ENCODE measurements at regions of chr17 and their contacts with region 1.

Region 1: GRCh38 chr17:8745586-8746500 is 1.2 kb upstream of the CCDC42 start:
- DNase-seq: no peak
- H3K4me3 ChIP-seq: peak overlapping the region; percentile 67 to 76 (median 72)
- H3K27ac ChIP-seq: peak overlapping the region in 3 of 4 donors; percentile 9 to 51 (median 48)
- H3K4me1 ChIP-seq: peaks cover 4 to 18% (median 17%) of the 10 kb centered on the region in 4 donors
- H3K27me3 ChIP-seq: peaks cover 0 to 4% (median 0%) of the 10 kb centered on the region in 4 donors
- CTCF ChIP-seq: peak; percentile 81 to 99 (median 98)
- EP300 ChIP-seq: no peak
- POLR2A ChIP-seq: no peak

Region 2: GRCh38 chr17:8409966-8410864 is 335.6 kb before region 1 on chr17:
- intact Hi-C with region 1: loop called (anchors 2 kb)
- DNase-seq: peak; percentile 94
- H3K4me3 ChIP-seq: no peak overlapping the region
- H3K27ac ChIP-seq: no peak overlapping the region
- H3K4me1 ChIP-seq: peaks cover 0 to 8% (median 7%) of the 10 kb centered on the region in 4 donors
- H3K27me3 ChIP-seq: peaks cover 0 to 21% (median 0%) of the 10 kb centered on the region in 4 donors
- CTCF ChIP-seq: peak; percentile 83 to 87 (median 86)
- EP300 ChIP-seq: no peak
- POLR2A ChIP-seq: no peak

Region 3: GRCh38 chr17:8522577-8522976 is 223.3 kb before region 1 on chr17:
- intact Hi-C with region 1: no loop called
- DNase-seq: no peak
- H3K4me3 ChIP-seq: no peak overlapping the region
- H3K27ac ChIP-seq: no peak overlapping the region
- H3K4me1 ChIP-seq: no peaks in the 10 kb centered on the region
- H3K27me3 ChIP-seq: no peaks in the 10 kb centered on the region
- CTCF ChIP-seq: no peak
- EP300 ChIP-seq: no peak
- POLR2A ChIP-seq: no peak

Region 4: DNA sequence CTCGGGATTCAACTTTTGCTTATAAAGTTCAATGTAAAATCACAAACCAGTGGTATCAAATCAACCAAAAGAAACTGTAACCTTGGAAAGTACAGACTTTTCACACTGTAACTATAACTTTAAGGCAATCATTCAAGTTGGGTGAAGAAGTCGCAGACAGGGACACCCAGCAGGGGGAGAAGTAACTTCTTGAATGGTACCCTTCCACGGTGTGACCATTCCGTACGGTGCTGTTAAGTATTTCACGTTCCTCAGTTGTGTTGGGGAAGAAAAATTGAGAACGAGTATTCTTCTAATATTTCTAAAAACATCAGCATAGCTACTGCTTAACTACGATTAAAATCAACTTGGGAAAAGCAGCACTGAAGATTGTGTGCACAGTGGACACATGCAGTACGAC is 171.2 kb before region 1 on chr17:
- intact Hi-C with region 1: loop called (anchors 2 kb)
- DNase-seq: no peak
- H3K4me3 ChIP-seq: no peak overlapping the region
- H3K27ac ChIP-seq: no peak overlapping the region
- H3K4me1 ChIP-seq: no peaks in the 10 kb centered on the region
- H3K27me3 ChIP-seq: no peaks in the 10 kb centered on the region
- CTCF ChIP-seq: peak; percentile 29 to 37 (median 33)
- EP300 ChIP-seq: no peak
- POLR2A ChIP-seq: no peak

Region 5: DNA sequence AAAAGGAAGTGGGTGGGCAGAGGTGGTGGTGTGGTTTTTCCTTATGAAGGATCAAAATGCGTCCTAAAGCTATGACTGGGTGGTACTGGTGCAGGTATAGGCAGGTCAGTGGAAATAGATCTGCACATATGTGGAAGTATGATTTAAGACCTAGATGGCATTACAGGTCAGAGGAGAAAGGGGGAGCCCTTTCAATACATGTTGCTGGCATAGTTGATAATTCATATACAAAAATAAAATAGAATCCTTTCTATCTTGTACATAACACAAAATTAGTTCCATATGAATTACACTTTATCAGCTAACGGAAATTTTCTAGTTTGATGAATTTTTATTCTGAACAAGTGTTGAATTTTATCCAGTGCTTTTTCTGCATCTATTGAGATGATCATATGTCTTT is 240.4 kb after region 1 on chr17:
- intact Hi-C with region 1: no loop called
- DNase-seq: no peak
- H3K4me3 ChIP-seq: no peak overlapping the region
- H3K27ac ChIP-seq: no peak overlapping the region
- H3K4me1 ChIP-seq: no peaks in the 10 kb centered on the region
- H3K27me3 ChIP-seq: no peaks in the 10 kb centered on the region
- CTCF ChIP-seq: no peak
- EP300 ChIP-seq: no peak
- POLR2A ChIP-seq: no peak

Measured in esophagus muscularis mucosa (tissue), 4 donors.